Activated CD4-positive, alpha-beta memory T cell treated with anti-CD3 and anti-CD28 coated beads, Interleukin-2, amount 10 ng/mL, durations not matched to agents 7 days and 5 days (primary cell): ENCODE measurements at regions of chr2 and their contacts with region 1.

Region 1: DNA sequence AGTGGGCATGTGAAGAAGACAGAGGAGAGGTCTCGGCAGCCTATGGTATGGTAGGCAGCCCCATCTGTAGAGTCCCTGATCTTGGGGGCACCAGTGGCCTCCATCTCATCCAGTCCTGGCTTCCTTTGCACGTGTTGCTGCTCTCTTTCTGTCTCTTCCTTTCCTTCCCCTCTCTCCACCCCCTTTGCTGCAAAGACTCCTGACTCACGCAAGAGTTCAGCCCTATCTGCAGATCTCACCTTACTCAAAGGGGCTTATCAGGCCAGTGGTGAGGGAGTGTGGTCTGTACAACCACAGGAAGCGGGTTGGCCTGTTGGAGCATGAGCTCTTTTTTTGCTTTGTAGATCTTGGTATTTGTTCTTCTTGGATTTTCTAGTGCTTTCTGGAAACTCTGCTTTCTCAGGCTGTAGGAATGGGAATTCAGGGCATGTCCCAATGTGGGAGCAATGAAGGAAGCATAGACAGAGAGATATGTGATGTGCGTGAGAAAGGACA is 14.6 kb upstream of the NT5DC4 start:
- DNase-seq: peak; percentile 93
- H3K4me3 Mint-ChIP-seq: peak overlapping the region; percentile 55
- H3K27ac Mint-ChIP-seq: peak overlapping the region; percentile 82
- H3K4me1 Mint-ChIP-seq: peaks cover 64% of the 10 kb centered on the region
- H3K27me3 Mint-ChIP-seq: peaks cover 3% of the 10 kb centered on the region

Region 2: DNA sequence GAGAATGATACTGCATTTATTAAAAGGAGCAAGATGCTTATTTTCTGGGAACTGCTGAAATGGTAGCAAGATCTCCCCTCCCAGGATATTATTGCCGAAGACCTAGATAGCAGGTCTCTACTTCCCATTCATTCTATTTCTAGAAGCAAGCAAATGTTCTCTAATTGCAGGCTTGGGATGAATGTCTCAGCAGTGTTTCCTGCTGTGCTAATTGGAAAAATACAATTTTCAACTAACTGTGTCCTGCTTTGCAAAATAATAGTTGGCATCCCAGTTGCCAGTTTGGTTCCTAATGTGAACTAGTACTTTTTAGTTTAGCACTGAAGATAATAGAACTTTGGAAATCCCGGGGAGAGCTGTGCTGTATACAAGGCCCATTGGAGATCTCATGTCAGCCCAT is 34.4 kb before region 1 on chr2:
- CTCF ChIA-PET with region 1: no interaction called
- POLR2A ChIA-PET with region 1: interaction called, 12 read pairs
- DNase-seq: no peak
- H3K4me3 Mint-ChIP-seq: no peak overlapping the region
- H3K27ac Mint-ChIP-seq: no peak overlapping the region
- H3K4me1 Mint-ChIP-seq: peaks cover 7% of the 10 kb centered on the region
- H3K27me3 Mint-ChIP-seq: no peaks in the 10 kb centered on the region

Region 3: GRCh38 chr2:112685271-112685884 is 20.8 kb before region 1 on chr2:
- CTCF ChIA-PET with region 1: interaction called, 70 read pairs
- POLR2A ChIA-PET with region 1: interaction called, 50 read pairs
- DNase-seq: no peak
- H3K4me3 Mint-ChIP-seq: no peak overlapping the region
- H3K27ac Mint-ChIP-seq: no peak overlapping the region
- H3K4me1 Mint-ChIP-seq: peaks cover 36% of the 10 kb centered on the region
- H3K27me3 Mint-ChIP-seq: no peaks in the 10 kb centered on the region

Region 4: GRCh38 chr2:112772322-112772721 is 66.1 kb after region 1 on chr2:
- CTCF ChIA-PET with region 1: no interaction called
- POLR2A ChIA-PET with region 1: no interaction called
- DNase-seq: no peak
- H3K4me3 Mint-ChIP-seq: no peak overlapping the region
- H3K27ac Mint-ChIP-seq: no peak overlapping the region
- H3K4me1 Mint-ChIP-seq: peaks cover 37% of the 10 kb centered on the region
- H3K27me3 Mint-ChIP-seq: no peaks in the 10 kb centered on the region